Motor neuron (in vitro differentiated cells): ENCODE measurements at regions of chr9 and their contacts with region 1.

Region 1: DNA sequence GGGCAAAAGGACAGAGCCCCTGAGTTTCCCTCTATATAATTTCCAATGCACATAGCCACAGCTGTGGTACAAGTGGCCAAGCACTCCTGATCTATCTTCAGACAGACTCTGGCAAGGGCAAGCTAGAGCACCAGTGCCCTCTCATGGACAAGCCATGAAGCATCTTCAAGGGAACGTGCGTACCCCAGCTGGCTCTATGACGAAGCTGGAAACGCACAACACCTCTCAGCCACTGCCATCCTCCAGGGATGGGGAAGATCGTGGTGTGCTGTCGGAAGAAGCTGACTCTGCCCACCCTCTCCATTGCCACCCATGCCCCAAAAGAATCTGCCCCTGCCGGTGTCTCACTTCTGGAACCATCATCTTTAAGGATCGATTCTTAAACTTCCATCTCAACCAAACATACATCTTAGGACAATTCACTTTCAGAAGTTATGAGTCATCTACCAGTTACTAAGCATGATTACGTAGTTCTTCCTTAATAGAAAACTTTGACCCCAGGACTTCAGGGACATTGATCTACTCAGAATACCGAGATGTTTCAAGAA is 482.9 kb downstream of the AGTPBP1 start:
- ATAC-seq: peak; percentile 99 to 100 (median 100)
- H3K4me3 ChIP-seq: no peak overlapping the region
- H3K27ac ChIP-seq: no peak overlapping the region
- H3K4me1 ChIP-seq: peaks cover 12 to 16% of the 10 kb centered on the region in 2 donors

Region 2: DNA sequence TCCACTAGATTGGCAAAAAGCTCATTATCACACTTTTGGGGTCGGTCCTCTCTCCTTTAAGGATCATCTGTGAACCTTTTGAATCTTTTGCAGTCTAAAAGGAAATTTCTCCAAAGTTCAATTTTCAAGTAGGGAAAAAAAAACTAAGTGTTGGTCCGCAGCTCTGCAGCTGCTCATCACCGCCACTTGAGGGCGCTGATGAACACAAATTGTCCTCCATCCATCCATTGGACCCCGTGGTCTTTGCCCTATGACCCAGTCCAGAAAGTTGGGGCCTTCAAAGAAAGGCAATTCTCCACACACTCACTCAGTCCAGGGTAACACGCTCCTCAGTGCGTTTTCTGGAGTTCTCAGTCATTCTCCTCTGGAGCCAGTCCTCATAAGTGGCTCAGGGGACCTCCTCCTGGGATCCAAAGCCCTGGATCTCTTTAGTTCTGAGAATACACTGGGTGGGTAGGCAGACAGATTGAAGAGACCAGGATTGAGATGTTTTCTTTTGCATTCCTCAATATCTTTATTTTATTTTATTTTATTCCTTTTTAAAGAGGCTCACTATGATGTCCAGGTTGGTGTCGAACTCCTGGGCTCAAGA is 854.7 kb before region 1 on chr9:
- in situ Hi-C with region 1: loop called in 4 of 9 experiments (anchors 25 kb)
- ATAC-seq: peak in 2 of 8 experiments; percentile 39 to 40
- H3K4me3 ChIP-seq: no peak overlapping the region
- H3K27ac ChIP-seq: no peak overlapping the region
- H3K4me1 ChIP-seq: no peaks in the 10 kb centered on the region

Region 3: DNA sequence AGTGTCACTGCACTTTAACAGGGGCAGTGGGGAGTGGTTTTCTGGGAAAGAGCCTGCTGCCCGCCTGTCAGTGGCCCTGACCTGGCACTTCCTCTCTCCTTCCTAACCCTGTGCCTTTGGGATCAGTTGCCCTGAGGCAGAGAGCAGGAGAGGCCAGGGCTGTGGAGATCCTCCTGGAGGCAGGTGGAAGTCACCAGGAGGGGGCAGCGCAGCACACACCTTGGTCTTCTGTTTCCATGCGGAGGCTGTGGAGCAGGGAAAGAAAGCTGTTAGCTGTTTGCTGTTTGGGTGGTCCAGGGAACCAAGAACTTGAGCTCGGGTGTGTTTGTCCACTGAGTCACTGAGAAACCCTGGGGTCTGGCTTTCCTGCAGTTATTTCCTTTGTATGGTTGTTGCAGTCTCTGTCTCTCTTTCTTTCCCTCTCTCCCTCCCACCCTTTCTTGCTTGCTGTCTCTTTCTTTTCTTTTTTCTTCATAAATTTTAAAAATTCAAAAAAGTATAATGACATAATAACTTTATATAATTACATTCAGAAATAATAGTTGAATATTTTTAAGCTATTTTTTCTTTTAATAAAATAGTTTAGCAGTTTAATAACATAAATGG is 561.3 kb before region 1 on chr9:
- in situ Hi-C with region 1: loop called in 2 of 9 experiments (anchors 10 to 25 kb)
- ATAC-seq: peak; percentile 81 to 90 (median 84)
- H3K4me3 ChIP-seq: no peak overlapping the region
- H3K27ac ChIP-seq: no peak overlapping the region
- H3K4me1 ChIP-seq: peaks cover 18 to 21% of the 10 kb centered on the region in 2 donors

Region 4: DNA sequence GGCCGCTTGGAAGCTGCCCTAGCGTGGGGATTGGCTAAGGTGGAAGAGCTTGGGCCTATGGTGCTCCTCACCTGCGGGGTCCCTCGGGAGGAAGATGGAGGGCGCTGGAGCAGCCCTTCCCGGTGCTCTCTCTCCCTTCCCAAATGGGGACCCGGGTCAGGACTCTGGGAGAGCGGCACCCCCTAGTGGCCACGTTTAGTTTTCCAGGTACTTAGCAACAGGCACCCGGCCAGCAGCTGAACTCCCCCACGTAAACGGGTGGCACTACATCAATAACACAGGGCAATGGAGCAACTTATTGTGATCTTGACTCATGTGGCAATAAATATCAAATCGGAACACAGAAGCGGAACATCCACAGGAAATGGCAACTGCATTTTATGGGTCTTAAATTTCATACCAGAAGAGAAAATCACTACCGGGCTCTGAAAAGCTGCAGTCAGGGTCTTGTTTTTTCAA is 166.3 kb after region 1 on chr9:
- in situ Hi-C with region 1: loop called in 1 of 9 experiments (anchors 10 kb)
- ATAC-seq: peak in 7 of 8 experiments; percentile 21 to 89 (median 50)
- H3K4me3 ChIP-seq: no peak overlapping the region
- H3K27ac ChIP-seq: no peak overlapping the region
- H3K4me1 ChIP-seq: peaks cover 31 to 44% of the 10 kb centered on the region in 2 donors

Region 5: DNA sequence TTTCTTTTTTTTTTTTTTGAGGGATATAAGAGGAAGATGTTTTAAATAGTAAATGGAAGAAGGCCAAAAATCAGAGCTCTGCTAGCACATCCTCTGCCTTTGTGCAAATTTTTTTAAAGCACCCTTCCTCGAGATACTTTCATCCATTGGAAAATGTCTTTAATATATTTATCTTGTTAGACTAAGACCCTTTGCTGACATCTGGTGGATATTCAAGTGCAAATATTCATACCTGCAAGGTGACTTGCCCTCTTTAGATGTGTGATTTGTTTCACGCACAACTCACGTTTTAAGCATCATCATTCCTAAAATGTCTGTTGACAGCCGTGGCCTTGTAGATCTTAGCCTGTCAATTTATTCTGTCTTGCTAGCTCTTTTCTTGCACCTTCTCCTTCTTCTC is 224.3 kb after region 1 on chr9:
- in situ Hi-C with region 1: no loop called
- ATAC-seq: no peak
- H3K4me3 ChIP-seq: no peak overlapping the region
- H3K27ac ChIP-seq: no peak overlapping the region
- H3K4me1 ChIP-seq: no peaks in the 10 kb centered on the region